ENCODE measurements at regions of chr12 and their contacts with region 1.

Region 1: DNA sequence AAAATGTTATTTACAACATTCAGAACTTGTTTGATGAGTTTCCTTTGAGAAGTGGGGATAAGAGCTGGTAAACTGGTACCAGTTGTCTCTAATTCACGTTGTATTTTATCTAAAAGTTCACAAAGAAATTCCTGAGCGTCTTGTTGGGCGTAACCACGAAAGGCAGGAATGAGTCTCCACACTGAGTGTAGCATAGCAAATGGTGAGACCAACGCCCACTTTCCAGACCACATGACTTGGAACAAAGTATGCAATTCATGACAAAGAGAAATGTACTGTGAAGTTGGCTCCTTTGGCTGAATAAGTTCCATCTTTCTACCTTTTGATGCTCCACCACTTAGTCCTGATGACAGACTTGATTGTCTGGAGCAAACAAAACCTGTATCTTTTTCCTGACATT is 18.4 kb downstream of the USP44 start:
- DNase-seq: no peak
- H3K4me3 ChIP-seq: no peak overlapping the region
- H3K27ac ChIP-seq: no peak overlapping the region
- H3K27me3 ChIP-seq: no peaks in the 10 kb centered on the region
- CTCF ChIP-seq: no peak

Region 2: GRCh38 chr12:95336390-95337067 is 196.3 kb before region 1 on chr12:
- intact Hi-C with region 1: loop called in 1 of 2 experiments (anchors 10 kb)
- DNase-seq: peak; percentile 47 to 89 (median 75)
- H3K4me3 ChIP-seq: peak overlapping the region in 41 of 59 donors; percentile 4 to 55 (median 26)
- H3K27ac ChIP-seq: peak overlapping the region in 53 of 59 donors; percentile 2 to 87 (median 47)
- H3K27me3 ChIP-seq: no peaks in the 10 kb centered on the region
- CTCF ChIP-seq: peak; percentile 59 to 95 (median 82)

Region 3: GRCh38 chr12:95574799-95575452 is 42.1 kb after region 1 on chr12:
- intact Hi-C with region 1: no loop called
- DNase-seq: no peak
- H3K4me3 ChIP-seq: no peak overlapping the region
- H3K27ac ChIP-seq: no peak overlapping the region
- H3K27me3 ChIP-seq: peaks cover 0 to 4% (median 0%) of the 10 kb centered on the region in 45 donors
- CTCF ChIP-seq: peak; percentile 21 to 70 (median 56)

Measured in dorsolateral prefrontal cortex (tissue), 120 donors.